ENCODE measurements at regions of chr7 and their contacts with region 1.

Region 1: GRCh38 chr7:2680792-2681490 is 7.1 kb upstream of the AMZ1 start:
- DNase-seq: peak; percentile 70
- H3K4me3 Mint-ChIP-seq: no peak overlapping the region
- H3K27ac Mint-ChIP-seq: no peak overlapping the region
- H3K4me1 Mint-ChIP-seq: no peaks in the 10 kb centered on the region
- H3K27me3 Mint-ChIP-seq: peaks cover 57% of the 10 kb centered on the region

Region 2: GRCh38 chr7:2451171-2452073 is 229.5 kb before region 1 on chr7:
- CTCF ChIA-PET with region 1: interaction called, 11 read pairs
- DNase-seq: peak; percentile 84
- H3K4me3 Mint-ChIP-seq: no peak overlapping the region
- H3K27ac Mint-ChIP-seq: no peak overlapping the region
- H3K4me1 Mint-ChIP-seq: peaks cover 8% of the 10 kb centered on the region
- H3K27me3 Mint-ChIP-seq: peaks cover 41% of the 10 kb centered on the region

Region 3: GRCh38 chr7:2719007-2719406 is 38.1 kb after region 1 on chr7:
- CTCF ChIA-PET with region 1: interaction called, 10 read pairs
- DNase-seq: peak; percentile 78
- H3K4me3 Mint-ChIP-seq: no peak overlapping the region
- H3K27ac Mint-ChIP-seq: no peak overlapping the region
- H3K4me1 Mint-ChIP-seq: peaks cover 68% of the 10 kb centered on the region
- H3K27me3 Mint-ChIP-seq: peaks cover 46% of the 10 kb centered on the region

Measured in activated naive CD4-positive, alpha-beta T cell treated with anti-CD3 and anti-CD28 coated beads, Interleukin-2, amount 10 ng/mL, durations not matched to agents 7 days and 5 days (primary cell).